Posterior vena cava (tissue), 2 donors: ENCODE measurements at regions of chr6 and their contacts with region 1.

Region 1: DNA sequence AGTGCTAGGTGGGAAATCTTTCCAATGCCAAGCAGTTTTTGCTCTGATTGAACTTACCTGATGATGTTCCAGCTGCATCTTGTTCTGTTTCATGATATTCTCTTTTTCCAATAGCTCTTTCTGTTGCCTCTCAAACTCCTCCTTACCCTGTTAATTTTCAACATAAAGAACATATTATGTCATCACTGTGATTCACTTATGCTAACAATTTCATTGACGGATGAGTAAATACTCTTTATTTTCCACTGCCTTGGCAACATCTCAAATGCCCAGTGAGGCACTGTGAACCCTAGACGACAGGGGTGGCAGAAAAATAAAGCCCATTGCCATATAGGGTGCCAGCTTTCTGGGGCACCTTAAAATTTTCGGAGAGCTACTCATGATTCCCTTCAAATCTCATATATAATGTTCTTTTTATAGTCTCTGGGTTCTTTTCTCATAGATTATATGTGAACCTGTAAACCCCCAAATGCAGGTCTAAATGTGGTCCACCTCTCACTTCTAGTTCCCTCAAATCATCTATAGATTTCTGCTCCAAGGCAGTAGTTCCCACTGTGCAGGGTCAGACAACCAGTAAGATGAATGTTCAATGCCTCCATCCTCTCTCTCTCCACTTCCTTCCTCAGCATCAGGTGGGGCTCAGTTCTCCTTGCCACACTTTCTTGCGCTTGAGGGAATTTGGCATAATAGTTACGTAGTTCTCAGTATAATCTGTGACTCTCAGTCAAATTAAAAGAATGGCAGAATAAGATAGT is 44.1 kb downstream of the NEDD9 start:
- DNase-seq: no peak

Region 2: GRCh38 chr6:11152581-11152980 is 35.8 kb before region 1 on chr6:
- intact Hi-C with region 1: loop called in 1 of 2 experiments (anchors 5 kb)
- DNase-seq: no peak